Activated CD4-positive, alpha-beta T cell treated with anti-CD3 and anti-CD28 coated beads for 36 hours (primary cell): ENCODE measurements at regions of chr2 and their contacts with region 1.

Region 1: DNA sequence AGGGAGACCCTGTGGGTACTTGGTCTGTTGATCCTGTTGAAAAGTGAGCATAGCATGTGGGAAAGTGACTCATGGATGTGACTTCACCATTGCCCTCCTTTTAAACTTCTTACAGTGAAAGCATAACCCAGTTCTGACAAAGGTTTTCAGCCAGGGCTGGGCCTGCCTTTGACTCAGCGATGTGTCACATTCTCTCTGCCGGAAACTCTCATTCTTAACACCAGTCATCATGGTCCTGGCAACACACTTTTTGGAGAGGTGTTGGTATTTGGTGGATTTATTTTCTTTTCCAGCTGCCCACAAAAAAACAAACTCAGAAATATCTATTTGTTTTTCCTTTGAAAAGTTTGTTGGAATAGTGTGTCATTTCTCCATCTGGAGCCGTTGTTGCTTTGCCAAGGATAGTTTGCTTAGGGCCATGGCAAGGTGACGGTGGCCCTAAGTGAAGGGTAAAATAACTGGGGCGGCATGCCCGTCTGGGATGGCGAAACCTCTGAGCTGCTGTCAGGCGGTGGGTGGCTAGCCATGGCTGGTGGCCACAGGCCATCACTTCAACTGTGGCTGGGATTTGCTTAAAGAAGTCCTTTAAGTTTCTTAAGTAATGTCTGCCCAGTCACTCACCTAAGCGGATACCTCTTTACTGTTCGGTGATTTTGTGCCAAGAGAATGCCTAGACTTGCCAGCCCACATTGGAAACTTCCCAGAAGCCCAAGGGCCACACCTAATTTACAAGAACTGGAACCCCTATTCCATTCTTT is 123.3 kb downstream of the LTBP1 start:
- DNase-seq: peak; percentile 76
- ATAC-seq: peak; percentile 98
- H3K4me3 Mint-ChIP-seq: no peak overlapping the region
- H3K27ac Mint-ChIP-seq: no peak overlapping the region
- H3K4me1 Mint-ChIP-seq: peaks cover 9% of the 10 kb centered on the region
- H3K27me3 Mint-ChIP-seq: peaks cover 15% of the 10 kb centered on the region

Region 2: GRCh38 chr2:33047939-33048338 is 22.1 kb before region 1 on chr2:
- CTCF ChIA-PET with region 1: no interaction called
- POLR2A ChIA-PET with region 1: no interaction called
- intact Hi-C with region 1: no loop called
- DNase-seq: no peak
- ATAC-seq: no peak
- H3K4me3 Mint-ChIP-seq: no peak overlapping the region
- H3K27ac Mint-ChIP-seq: no peak overlapping the region
- H3K4me1 Mint-ChIP-seq: no peaks in the 10 kb centered on the region
- H3K27me3 Mint-ChIP-seq: peaks cover 7% of the 10 kb centered on the region

Region 3: DNA sequence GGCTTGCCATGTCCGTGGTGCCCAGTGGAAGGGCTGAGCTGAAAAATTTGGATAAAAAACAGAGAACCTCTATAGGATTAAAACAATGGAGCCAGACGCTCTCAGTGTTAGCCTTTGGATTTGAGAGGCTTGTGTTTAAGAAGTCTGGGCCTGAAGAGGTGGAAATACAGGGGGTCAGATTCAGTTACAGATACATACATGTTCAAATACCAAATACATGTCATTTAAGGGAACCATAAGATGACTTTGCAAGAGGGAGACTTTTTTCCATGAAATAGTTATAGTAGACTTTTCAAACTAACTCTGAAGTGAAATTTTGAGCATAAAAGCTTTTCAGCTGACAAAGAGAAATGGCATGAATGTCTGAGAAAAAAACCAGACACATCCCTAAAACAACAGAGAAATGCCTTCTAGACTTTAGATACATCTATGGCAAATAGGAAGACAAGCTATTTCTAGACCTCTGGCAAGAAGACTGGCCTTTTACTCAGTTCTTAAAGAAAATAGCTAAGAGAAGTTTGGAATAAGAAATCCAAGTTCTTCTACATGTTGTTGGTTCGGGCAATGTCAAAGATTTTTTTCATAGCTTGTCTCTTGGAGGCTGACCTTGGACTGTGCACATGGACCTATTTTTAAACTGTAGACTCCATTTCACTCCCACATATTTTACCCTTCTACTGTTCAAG is 10.5 kb before region 1 on chr2:
- CTCF ChIA-PET with region 1: no interaction called
- POLR2A ChIA-PET with region 1: no interaction called
- intact Hi-C with region 1: no loop called
- DNase-seq: no peak
- ATAC-seq: no peak
- H3K4me3 Mint-ChIP-seq: no peak overlapping the region
- H3K27ac Mint-ChIP-seq: no peak overlapping the region
- H3K4me1 Mint-ChIP-seq: no peaks in the 10 kb centered on the region
- H3K27me3 Mint-ChIP-seq: peaks cover 2% of the 10 kb centered on the region

Region 4: DNA sequence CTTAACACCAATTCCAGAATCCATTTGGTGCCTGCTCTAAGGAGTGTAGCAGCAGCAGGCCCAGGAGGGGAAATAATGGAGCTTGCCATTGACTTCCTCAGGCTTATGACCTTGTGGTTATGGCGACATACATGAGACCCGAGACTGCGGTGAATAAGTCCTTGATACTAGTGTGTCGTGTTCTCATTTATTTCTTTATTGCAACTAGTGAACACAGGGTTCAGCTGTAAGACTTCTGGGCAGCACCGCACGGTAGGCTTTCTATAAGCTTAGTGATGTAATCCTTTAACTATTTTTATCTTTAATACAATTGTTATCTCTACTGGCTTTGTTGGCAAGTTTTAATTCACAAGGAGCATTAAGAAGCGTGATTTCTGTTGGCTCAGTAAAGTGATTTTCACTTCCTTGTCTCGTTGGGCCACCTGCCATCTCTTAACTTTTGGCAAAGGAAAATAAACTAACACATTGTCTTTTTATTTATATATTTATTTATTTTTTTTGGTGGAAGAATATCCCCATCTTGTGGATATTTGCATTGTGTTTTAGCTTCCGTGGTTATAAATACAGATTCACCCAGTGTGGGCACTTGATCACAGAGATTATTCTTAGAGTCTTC is 16.4 kb after region 1 on chr2:
- CTCF ChIA-PET with region 1: no interaction called
- POLR2A ChIA-PET with region 1: no interaction called
- intact Hi-C with region 1: no loop called
- DNase-seq: no peak
- ATAC-seq: no peak
- H3K4me3 Mint-ChIP-seq: no peak overlapping the region
- H3K27ac Mint-ChIP-seq: no peak overlapping the region
- H3K4me1 Mint-ChIP-seq: no peaks in the 10 kb centered on the region
- H3K27me3 Mint-ChIP-seq: peaks cover 12% of the 10 kb centered on the region

Region 5: GRCh38 chr2:33275689-33276444 is 205.8 kb after region 1 on chr2:
- CTCF ChIA-PET with region 1: no interaction called
- POLR2A ChIA-PET with region 1: no interaction called
- intact Hi-C with region 1: loop called in 1 of 2 experiments (anchors 1 kb)
- DNase-seq: peak; percentile 54
- ATAC-seq: peak; percentile 75
- H3K4me3 Mint-ChIP-seq: no peak overlapping the region
- H3K27ac Mint-ChIP-seq: no peak overlapping the region
- H3K4me1 Mint-ChIP-seq: peaks cover 15% of the 10 kb centered on the region
- H3K27me3 Mint-ChIP-seq: no peaks in the 10 kb centered on the region

Region 6: GRCh38 chr2:33321236-33321771 is 251.2 kb after region 1 on chr2:
- CTCF ChIA-PET with region 1: no interaction called
- POLR2A ChIA-PET with region 1: no interaction called
- intact Hi-C with region 1: loop called in 1 of 2 experiments (anchors 1 kb)
- DNase-seq: peak; percentile 63
- ATAC-seq: peak; percentile 88
- H3K4me3 Mint-ChIP-seq: peak overlapping the region; percentile 26
- H3K27ac Mint-ChIP-seq: peak overlapping the region; percentile 84
- H3K4me1 Mint-ChIP-seq: peaks cover 26% of the 10 kb centered on the region
- H3K27me3 Mint-ChIP-seq: peaks cover 5% of the 10 kb centered on the region

Region 7: GRCh38 chr2:33497221-33497650 is 427.2 kb after region 1 on chr2:
- CTCF ChIA-PET with region 1: no interaction called
- POLR2A ChIA-PET with region 1: no interaction called
- intact Hi-C with region 1: loop called in 1 of 2 experiments (anchors 5 kb)
- DNase-seq: no peak
- ATAC-seq: peak; percentile 74
- H3K4me3 Mint-ChIP-seq: no peak overlapping the region
- H3K27ac Mint-ChIP-seq: no peak overlapping the region
- H3K4me1 Mint-ChIP-seq: peaks cover 39% of the 10 kb centered on the region
- H3K27me3 Mint-ChIP-seq: peaks cover 3% of the 10 kb centered on the region

Region 8: GRCh38 chr2:33599175-33599942 is 529.3 kb after region 1 on chr2 and contains the start of gene FAM98A:
- CTCF ChIA-PET with region 1: no interaction called
- POLR2A ChIA-PET with region 1: no interaction called
- intact Hi-C with region 1: loop called in 1 of 2 experiments (anchors 5 kb)
- DNase-seq: peak; percentile 99
- ATAC-seq: peak; percentile 91
- H3K4me3 Mint-ChIP-seq: peak within 1 kb of the TSS; percentile 88
- H3K27ac Mint-ChIP-seq: peak within 1 kb of the TSS; percentile 93
- H3K4me1 Mint-ChIP-seq: peaks cover 24% of the 10 kb centered on the region
- H3K27me3 Mint-ChIP-seq: no peaks in the 10 kb centered on the region
- total RNA-seq, gene FAM98A: 42.9 to 61.5 TPM

Region 9: DNA sequence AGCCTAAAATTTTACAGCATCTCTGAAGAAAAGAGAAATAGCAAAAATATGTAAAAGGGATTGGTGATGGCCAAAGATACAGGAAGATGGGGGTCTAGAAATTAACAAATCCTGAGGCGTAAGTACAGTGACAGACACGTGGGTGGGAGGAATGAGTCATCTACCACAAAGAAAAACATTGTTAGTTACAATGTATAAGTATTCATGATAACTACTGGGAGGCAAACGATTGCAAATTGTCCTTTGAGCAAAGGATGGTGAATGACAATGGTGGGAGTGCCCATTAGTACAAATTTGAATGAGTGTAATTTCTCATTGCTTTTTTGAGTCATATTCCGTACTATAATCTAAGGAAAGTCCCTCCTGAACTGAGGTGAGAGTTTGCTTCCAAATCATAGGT is 1338.0 kb after region 1 on chr2:
- CTCF ChIA-PET with region 1: no interaction called
- POLR2A ChIA-PET with region 1: no interaction called
- intact Hi-C with region 1: loop called in 1 of 2 experiments (anchors 5 kb)
- DNase-seq: peak; percentile 4
- ATAC-seq: no peak
- H3K4me3 Mint-ChIP-seq: no peak overlapping the region
- H3K27ac Mint-ChIP-seq: no peak overlapping the region
- H3K4me1 Mint-ChIP-seq: no peaks in the 10 kb centered on the region
- H3K27me3 Mint-ChIP-seq: no peaks in the 10 kb centered on the region